ENCODE measurements at regions of chr16 and their contacts with region 1.

Region 1: GRCh38 chr16:67816240-67817031 is 9.7 kb downstream of the TSNAXIP1 start:
- DNase-seq: peak; percentile 92
- CTCF ChIP-seq: peak; percentile 100

Region 2: GRCh38 chr16:67672739-67673662 is 143.4 kb before region 1 on chr16:
- CTCF ChIA-PET with region 1: interaction called, 27 read pairs
- POLR2A ChIA-PET with region 1: no interaction called
- DNase-seq: peak; percentile 84
- CTCF ChIP-seq: peak; percentile 80

Region 3: DNA sequence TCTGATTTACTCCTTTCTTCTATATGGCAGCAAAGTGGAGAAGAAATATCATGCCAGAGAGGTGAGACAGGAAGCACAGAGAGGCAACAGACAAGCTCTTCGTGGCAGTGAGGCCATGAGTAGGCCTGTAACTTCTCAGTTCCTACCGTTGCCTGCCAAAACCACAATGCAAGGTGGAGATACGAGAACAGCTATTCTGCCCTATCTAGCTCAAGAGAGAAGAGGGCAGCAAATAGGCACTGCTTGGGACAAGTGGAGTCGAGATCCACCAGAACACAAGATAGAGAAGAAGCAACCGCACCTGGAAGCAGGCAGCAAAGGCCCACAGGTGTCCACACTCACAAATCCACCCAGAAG is 34.9 kb before region 1 on chr16:
- CTCF ChIA-PET with region 1: interaction called, 34 read pairs
- POLR2A ChIA-PET with region 1: no interaction called
- DNase-seq: peak; percentile 46
- CTCF ChIP-seq: no peak

Region 4: DNA sequence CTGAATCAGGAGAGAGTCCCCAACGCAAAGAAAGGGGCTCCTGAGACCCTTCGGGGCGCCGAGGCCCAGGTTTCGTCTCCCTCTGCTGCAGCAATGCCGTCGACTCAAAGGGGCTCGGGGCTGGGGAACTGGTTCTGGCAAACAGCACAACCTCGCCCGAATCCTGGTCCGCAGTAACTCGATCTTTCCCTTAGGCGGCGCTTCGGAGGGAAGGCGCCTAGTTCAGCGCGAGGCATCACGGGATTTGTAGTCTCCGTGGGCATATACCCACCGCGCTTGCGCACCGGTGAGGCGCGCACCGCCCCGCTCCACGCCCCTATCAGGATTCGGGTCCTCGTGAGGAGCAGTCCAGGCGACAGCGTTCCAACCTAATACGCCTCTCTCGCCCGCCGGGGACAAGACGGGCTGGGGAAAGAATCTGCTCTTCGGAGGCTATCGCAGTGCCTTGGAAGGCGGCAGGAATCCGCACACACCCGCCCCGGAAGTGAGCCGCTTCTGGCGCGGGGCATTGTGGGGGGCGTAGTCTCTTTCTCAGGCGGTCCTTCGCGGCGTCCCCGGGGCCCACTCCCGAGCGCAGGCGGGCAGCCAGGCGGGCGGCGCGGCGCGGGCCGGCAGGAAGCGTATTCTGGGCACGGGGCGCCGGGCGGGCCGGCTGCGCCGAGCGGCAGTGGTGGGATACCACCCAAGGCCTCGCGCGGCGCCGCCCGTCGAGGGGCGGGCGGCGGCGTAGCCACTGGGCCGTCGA is 25.5 kb after region 1 on chr16 and contains the start of gene THAP11:
- CTCF ChIA-PET with region 1: interaction called, 18 read pairs
- POLR2A ChIA-PET with region 1: no interaction called
- DNase-seq: peak; percentile 92
- CTCF ChIP-seq: peak; percentile 87

Region 5: GRCh38 chr16:67872786-67873537 is 56.5 kb after region 1 on chr16 and contains the start of gene EDC4:
- CTCF ChIA-PET with region 1: interaction called, 19 read pairs
- POLR2A ChIA-PET with region 1: no interaction called
- DNase-seq: peak; percentile 96
- CTCF ChIP-seq: no peak

Region 6: DNA sequence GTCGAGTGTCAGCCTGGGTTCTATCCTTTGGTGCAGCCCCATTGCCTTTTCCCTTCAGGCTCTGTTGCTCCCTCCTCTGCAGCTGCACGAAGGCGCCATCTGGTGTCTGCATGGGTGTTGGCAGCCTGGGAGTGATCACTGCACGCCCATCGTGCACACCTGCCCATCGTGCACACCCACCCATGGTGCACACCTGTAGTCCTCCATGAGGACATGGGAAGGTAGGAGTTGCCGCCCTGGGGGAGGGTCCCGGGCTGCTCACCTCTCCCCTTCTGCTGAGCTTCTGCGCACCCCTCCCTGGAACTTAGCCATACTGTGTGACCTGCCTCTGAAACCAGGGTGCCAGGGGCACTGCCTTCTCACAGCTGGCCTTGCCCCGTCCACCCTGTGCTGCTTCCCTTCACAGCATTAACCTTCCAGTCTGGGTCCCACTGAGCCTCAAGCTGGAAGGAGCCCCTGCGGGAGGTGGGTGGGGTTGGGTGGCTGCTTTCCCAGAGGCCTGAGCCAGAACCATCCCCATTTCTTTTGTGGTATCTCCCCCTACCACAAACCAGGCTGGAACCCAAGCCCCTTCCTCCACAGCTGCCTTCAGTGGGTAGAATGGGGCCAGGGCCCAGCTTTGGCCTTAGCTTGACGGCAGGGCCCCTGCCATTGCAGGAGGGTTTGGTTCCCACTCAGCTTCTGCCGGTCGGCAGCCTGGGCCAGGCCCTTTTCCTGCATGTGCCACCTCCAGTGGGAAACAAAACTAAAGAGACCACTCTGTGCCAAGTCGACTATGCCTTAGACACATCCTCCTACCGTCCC is 112.3 kb after region 1 on chr16:
- CTCF ChIA-PET with region 1: interaction called, 29 read pairs
- POLR2A ChIA-PET with region 1: no interaction called
- DNase-seq: peak; percentile 89
- CTCF ChIP-seq: peak; percentile 97

Region 7: GRCh38 chr16:68040507-68041288 is 224.3 kb after region 1 on chr16:
- CTCF ChIA-PET with region 1: interaction called, 12 read pairs
- POLR2A ChIA-PET with region 1: no interaction called
- DNase-seq: peak; percentile 87
- CTCF ChIP-seq: peak; percentile 88